PC-9 (cell line): ENCODE measurements at regions of chr11 and their contacts with region 1.

Region 1: DNA sequence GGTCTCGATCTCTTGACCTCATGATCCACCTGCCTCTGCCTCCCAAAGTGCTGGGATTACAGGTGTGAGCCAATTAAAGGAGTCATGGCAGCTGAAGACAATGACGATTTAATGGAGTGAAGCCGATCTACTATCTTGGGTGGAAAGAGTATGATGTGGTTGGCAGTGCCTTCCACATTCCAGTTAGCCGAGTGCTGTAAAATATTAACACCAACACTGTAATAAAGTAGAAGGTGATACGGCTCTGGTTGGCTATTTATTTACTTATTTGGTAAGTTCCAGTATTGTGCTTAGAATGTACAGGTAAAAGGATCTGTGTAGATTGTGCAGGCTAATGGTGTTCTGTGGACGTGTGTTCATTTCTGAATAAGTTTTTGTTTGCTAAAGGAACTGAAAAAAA is 149.6 kb upstream of the MTMR2 start:
- DNase-seq: no peak
- H3K4me3 ChIP-seq: no peak overlapping the region
- H3K27ac ChIP-seq: no peak overlapping the region
- H3K4me1 ChIP-seq: peaks cover 9% of the 10 kb centered on the region
- H3K27me3 ChIP-seq: no peaks in the 10 kb centered on the region
- CTCF ChIP-seq: no peak

Region 2: DNA sequence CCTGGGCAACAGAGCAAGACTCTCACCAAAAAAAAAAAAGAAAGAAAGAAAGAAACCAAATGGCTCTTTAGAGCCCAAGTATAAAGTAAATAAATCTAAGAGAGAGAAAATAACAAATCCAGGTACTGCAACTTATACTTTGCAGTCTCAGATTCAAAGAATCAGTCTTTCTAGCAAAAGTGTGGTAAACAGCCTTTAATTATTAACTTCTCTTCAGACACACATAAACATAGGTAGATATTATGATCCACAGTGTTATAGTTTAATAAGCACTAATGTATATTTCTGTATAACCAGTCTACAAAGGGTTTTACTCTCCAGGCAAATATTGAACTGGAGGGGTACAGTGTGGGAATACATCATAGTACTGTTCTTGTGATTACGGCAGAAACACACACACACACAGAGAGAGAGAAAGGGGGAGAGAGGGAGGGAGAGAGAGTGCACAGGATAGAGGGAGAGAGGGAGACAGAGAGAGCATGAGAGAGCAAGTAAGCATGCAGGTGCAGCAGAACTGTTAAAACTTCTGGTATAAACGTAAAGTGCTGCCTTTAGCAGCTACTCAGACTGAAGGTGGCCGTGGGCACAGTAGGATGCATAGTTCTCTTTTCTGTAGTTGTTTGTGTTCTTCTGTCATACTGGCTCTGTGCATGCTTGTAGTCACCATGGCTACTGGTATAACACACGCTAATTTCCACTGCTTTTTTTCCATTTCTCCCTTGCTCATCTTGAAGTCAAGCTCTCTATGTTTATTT is 181.9 kb before region 1 on chr11:
- CTCF ChIA-PET with region 1: no interaction called
- POLR2A ChIA-PET with region 1: no interaction called
- intact Hi-C with region 1: no loop called
- DNase-seq: peak in 1 of 2 experiments; percentile 6
- H3K4me3 ChIP-seq: no peak overlapping the region
- H3K27ac ChIP-seq: no peak overlapping the region
- H3K4me1 ChIP-seq: no peaks in the 10 kb centered on the region
- H3K27me3 ChIP-seq: no peaks in the 10 kb centered on the region
- CTCF ChIP-seq: no peak

Region 3: DNA sequence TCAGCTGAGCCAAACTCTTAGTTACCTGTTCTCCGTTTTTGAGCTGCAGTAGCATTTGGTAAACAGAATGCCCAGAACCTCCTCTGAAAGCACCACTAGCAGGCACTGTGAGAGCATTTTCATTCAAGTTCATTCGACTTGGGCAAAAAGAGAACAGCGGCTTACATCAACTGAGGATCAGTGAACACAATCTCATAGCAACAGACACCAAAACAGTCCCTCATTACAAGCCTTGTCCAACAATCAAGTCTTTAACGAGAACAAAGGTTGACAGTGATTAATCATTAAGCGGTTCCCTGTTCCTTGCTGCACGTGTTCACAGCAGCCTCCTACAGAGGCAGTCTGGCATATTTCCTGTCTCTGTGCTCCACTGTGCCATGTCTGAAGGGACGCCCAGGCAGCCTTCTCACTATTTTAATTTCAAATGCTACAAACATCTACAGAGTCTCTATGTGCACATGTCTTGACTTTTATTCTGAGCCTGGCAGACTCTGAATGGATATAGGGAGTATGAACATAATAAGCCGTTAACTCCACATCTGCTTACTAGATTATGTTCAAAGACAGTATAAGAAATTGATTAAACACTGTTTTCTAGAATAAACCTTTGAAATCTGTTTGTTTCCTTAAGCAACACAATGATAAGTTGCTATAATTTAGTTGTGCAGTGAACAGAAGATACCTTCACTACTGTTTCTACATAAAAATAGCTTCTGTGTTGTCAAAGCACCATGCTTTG is 61.3 kb before region 1 on chr11:
- CTCF ChIA-PET with region 1: no interaction called
- POLR2A ChIA-PET with region 1: no interaction called
- intact Hi-C with region 1: no loop called
- DNase-seq: peak; percentile 53 to 65
- H3K4me3 ChIP-seq: no peak overlapping the region
- H3K27ac ChIP-seq: no peak overlapping the region
- H3K4me1 ChIP-seq: peaks cover 24% of the 10 kb centered on the region
- H3K27me3 ChIP-seq: no peaks in the 10 kb centered on the region
- CTCF ChIP-seq: peak; percentile 21; the same call in 1 of the 2 replicates

Region 4: DNA sequence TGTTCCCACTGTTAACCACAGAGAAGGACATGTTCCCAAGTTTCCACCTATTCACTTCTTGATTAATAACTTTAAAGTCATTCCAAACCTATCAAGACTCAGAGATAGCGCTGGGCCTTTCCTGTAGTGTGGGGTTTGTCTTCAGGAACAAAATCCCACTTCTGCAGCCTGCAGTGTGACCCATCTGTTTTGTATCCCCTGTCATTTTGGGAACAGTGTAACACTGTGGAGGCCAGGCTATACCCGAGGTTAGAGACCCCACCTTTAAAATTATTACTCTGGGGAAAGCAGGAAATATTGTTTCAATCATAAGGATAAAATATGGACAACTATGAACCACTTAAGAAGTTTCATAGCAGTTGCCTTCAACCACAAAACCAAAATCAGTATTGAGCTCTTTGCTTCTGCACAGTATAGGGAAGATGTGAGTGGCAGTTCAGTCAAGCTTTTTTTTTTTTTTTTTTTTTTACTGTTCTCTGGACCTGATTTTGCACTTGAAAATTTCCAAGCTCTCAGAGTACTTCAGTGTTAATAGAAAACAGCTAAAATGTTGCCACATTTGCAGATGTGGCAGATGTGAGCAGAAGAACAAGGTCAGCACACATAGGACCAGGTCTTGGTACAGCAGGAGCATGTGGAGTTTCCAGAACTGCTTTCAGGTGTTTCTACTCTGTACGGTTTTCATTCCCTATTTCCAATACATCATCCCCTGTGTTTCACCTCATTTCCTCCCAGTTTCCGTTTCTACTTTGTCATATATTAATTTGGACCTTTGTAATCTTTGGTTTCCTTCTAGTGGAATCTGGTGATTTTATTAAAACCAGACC is 147.9 kb after region 1 on chr11:
- CTCF ChIA-PET with region 1: no interaction called
- POLR2A ChIA-PET with region 1: interaction called, 15 read pairs
- intact Hi-C with region 1: no loop called
- DNase-seq: no peak
- H3K4me3 ChIP-seq: no peak overlapping the region
- H3K27ac ChIP-seq: peak overlapping the region; percentile 5; the same call in 1 of the 2 replicates
- H3K4me1 ChIP-seq: peaks cover 12% of the 10 kb centered on the region
- H3K27me3 ChIP-seq: no peaks in the 10 kb centered on the region
- CTCF ChIP-seq: no peak